H1 (cell line): ENCODE measurements at regions of chr17 and their contacts with region 1.

Region 1: DNA sequence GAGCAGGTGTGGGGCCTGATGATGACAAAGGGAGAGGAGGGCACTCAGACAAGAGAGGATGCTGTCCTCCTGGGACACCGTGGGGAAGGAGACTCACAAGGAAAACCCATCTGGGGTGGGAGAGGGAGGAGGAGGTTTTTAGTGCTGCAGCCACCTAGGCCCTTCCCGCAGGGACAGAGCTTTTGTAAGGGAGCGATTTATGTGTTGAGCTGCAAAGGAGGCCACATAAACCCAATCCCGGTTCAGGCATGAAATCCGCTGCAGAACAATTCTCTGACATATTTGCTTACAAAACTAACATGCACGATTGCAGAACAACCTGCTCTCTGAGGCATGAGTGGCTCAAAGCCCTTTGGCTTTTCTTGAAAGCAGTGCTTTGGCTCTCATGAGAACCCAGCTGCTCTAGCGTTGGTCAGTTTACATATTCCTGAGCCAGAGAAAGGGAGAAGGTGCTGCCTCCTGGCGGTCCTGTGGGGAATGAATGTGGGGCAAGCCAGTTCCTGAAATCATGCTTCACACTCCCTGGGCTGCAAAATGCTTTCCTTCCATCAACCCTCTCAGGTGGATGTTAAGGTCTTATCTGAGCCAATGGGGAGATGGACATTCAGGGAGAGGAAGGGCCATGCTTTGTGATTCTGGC is 122.4 kb upstream of the NLRP1 start:
- DNase-seq: peak in 1 of 2 experiments; percentile 90
- H3K4me3 ChIP-seq: no peak overlapping the region
- H3K27ac ChIP-seq: no peak overlapping the region
- H3K4me1 ChIP-seq: peaks cover 4 to 19% (median 11%) of the 10 kb centered on the region in 4 experiments; a peak in 5 of 7 replicates
- H3K27me3 ChIP-seq: no peaks in the 10 kb centered on the region
- CTCF ChIP-seq: peak; percentile 87 to 98 (median 92)
- EP300 ChIP-seq: no peak
- POLR2A ChIP-seq: no peak
- RAD21 ChIP-seq: peak; percentile 82 to 92

Region 2: GRCh38 chr17:5587438-5588032 is 119.2 kb before region 1 on chr17:
- CTCF ChIA-PET with region 1: interaction called, 19 read pairs
- POLR2A ChIA-PET with region 1: no interaction called
- DNase-seq: no peak
- H3K4me3 ChIP-seq: no peak overlapping the region
- H3K27ac ChIP-seq: no peak overlapping the region
- H3K4me1 ChIP-seq: peaks cover 0 to 3% (median 0%) of the 10 kb centered on the region in 4 experiments; a peak in 1 of 7 replicates
- H3K27me3 ChIP-seq: no peaks in the 10 kb centered on the region
- CTCF ChIP-seq: peak; percentile 14 to 87 (median 85)
- EP300 ChIP-seq: no peak
- POLR2A ChIP-seq: no peak
- RAD21 ChIP-seq: peak; percentile 97 to 98

Region 3: DNA sequence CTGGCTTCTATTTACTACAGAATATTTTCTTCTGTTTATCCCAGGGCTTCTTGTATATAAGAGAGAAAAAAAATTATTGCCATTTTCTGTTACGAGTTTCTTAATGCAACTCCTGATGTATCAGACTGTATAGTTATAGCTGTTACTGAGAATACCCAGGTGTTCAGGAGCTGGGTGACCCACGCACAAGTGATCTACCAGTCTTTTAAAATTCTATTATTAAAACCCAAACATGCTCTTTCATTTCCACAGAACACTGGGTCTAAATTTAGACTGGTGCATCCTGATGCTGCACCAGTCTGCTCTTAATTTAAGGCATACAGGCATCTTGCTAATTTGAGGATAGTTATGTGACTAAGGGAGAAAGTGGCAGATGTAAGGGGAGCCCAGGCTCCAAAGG is 91.2 kb before region 1 on chr17:
- CTCF ChIA-PET with region 1: interaction called, 11 read pairs
- POLR2A ChIA-PET with region 1: interaction called, 3 read pairs
- DNase-seq: no peak
- H3K4me3 ChIP-seq: no peak overlapping the region
- H3K27ac ChIP-seq: no peak overlapping the region
- H3K4me1 ChIP-seq: no peaks in the 10 kb centered on the region
- H3K27me3 ChIP-seq: no peaks in the 10 kb centered on the region
- CTCF ChIP-seq: no peak
- EP300 ChIP-seq: no peak
- POLR2A ChIP-seq: no peak
- RAD21 ChIP-seq: no peak

Region 4: GRCh38 chr17:5667871-5668270 is 38.8 kb before region 1 on chr17:
- CTCF ChIA-PET with region 1: interaction called, 26 read pairs
- POLR2A ChIA-PET with region 1: no interaction called
- DNase-seq: peak in 1 of 2 experiments; percentile 47
- H3K4me3 ChIP-seq: no peak overlapping the region
- H3K27ac ChIP-seq: no peak overlapping the region
- H3K4me1 ChIP-seq: 0 out of 7 replicates have a peak, but pooled peaks cover 0 to under 1% (median 0%) of the 10 kb centered on the region in 4 experiments
- H3K27me3 ChIP-seq: no peaks in the 10 kb centered on the region
- CTCF ChIP-seq: peak; percentile 39 to 57 (median 45)
- EP300 ChIP-seq: no peak
- POLR2A ChIP-seq: no peak
- RAD21 ChIP-seq: peak; percentile 16 to 42; a peak in 3 of 4 replicates

Region 5: GRCh38 chr17:5694551-5694950 is 12.1 kb before region 1 on chr17:
- CTCF ChIA-PET with region 1: interaction called, 42 read pairs
- POLR2A ChIA-PET with region 1: interaction called, 6 read pairs
- DNase-seq: peak in 1 of 2 experiments; percentile 57
- H3K4me3 ChIP-seq: no peak overlapping the region
- H3K27ac ChIP-seq: no peak overlapping the region
- H3K4me1 ChIP-seq: peaks cover 4 to 8% (median 6%) of the 10 kb centered on the region in 4 experiments
- H3K27me3 ChIP-seq: no peaks in the 10 kb centered on the region
- CTCF ChIP-seq: no peak
- EP300 ChIP-seq: no peak
- POLR2A ChIP-seq: no peak
- RAD21 ChIP-seq: no peak

Region 6: GRCh38 chr17:5783851-5784250 is 77.2 kb after region 1 on chr17:
- CTCF ChIA-PET with region 1: no interaction called
- POLR2A ChIA-PET with region 1: no interaction called
- DNase-seq: no peak
- H3K4me3 ChIP-seq: no peak overlapping the region
- H3K27ac ChIP-seq: no peak overlapping the region
- H3K4me1 ChIP-seq: no peaks in the 10 kb centered on the region; a peak in 1 of 7 replicates
- H3K27me3 ChIP-seq: no peaks in the 10 kb centered on the region
- CTCF ChIP-seq: no peak
- EP300 ChIP-seq: no peak
- POLR2A ChIP-seq: no peak
- RAD21 ChIP-seq: no peak

Region 7: DNA sequence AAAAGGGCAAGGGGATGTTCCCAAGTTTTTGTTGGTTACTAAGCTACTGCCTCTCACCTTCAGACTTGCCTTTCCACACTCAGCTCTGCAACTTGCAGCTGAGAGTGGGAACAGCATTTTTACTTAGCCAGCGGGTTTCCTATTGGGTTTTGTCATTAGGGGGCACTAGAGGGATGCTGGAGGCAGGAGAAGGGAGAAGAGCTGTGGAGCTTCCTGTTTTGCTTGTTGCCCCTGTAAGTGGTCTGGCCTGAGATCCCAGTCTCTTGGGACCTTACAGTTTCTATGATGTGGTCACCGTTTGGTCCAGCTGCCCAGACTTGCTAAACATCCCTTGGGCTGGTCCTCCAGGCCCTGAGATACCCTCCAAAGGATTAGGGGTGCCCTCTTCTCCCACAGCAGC is 87.2 kb after region 1 on chr17:
- CTCF ChIA-PET with region 1: interaction called, 17 read pairs
- POLR2A ChIA-PET with region 1: no interaction called
- DNase-seq: peak in 1 of 2 experiments; percentile 36
- H3K4me3 ChIP-seq: no peak overlapping the region
- H3K27ac ChIP-seq: no peak overlapping the region
- H3K4me1 ChIP-seq: peaks cover 1 to 18% (median 12%) of the 10 kb centered on the region in 4 experiments; a peak in 6 of 7 replicates
- H3K27me3 ChIP-seq: peaks cover 0 to 3% (median 0%) of the 10 kb centered on the region in 4 experiments; a peak in 2 of 7 replicates
- CTCF ChIP-seq: peak; percentile 49 to 80 (median 77)
- EP300 ChIP-seq: no peak
- POLR2A ChIP-seq: no peak
- RAD21 ChIP-seq: peak; percentile 88 to 96